Activated CD8-positive, alpha-beta T cell treated with anti-CD3 and anti-CD28 coated beads for 36 hours (primary cell): ENCODE measurements at regions of chr15 and their contacts with region 1.

Region 1: GRCh38 chr15:101167753-101168463 is 83.9 kb downstream of the CHSY1 start:
- DNase-seq: peak; percentile 90
- ATAC-seq: peak; percentile 95
- H3K4me3 Mint-ChIP-seq: peak overlapping the region; percentile 58
- H3K27ac Mint-ChIP-seq: peak overlapping the region; percentile 86
- H3K4me1 Mint-ChIP-seq: peaks cover 26% of the 10 kb centered on the region
- H3K27me3 Mint-ChIP-seq: no peaks in the 10 kb centered on the region
- CTCF ChIP-seq: no peak

Region 2: GRCh38 chr15:101127506-101128076 is 40.3 kb before region 1 on chr15:
- CTCF ChIA-PET with region 1: no interaction called
- POLR2A ChIA-PET with region 1: no interaction called
- intact Hi-C with region 1: loop called (anchors 5 kb)
- DNase-seq: peak; percentile 75
- ATAC-seq: peak; percentile 71
- H3K4me3 Mint-ChIP-seq: peak overlapping the region; percentile 53
- H3K27ac Mint-ChIP-seq: peak overlapping the region; percentile 96
- H3K4me1 Mint-ChIP-seq: peaks cover 57% of the 10 kb centered on the region
- H3K27me3 Mint-ChIP-seq: no peaks in the 10 kb centered on the region
- CTCF ChIP-seq: no peak

Region 3: GRCh38 chr15:101147181-101147580 is 20.7 kb before region 1 on chr15:
- CTCF ChIA-PET with region 1: no interaction called
- POLR2A ChIA-PET with region 1: no interaction called
- intact Hi-C with region 1: no loop called
- DNase-seq: no peak
- ATAC-seq: no peak
- H3K4me3 Mint-ChIP-seq: no peak overlapping the region
- H3K27ac Mint-ChIP-seq: no peak overlapping the region
- H3K4me1 Mint-ChIP-seq: peaks cover 7% of the 10 kb centered on the region
- H3K27me3 Mint-ChIP-seq: no peaks in the 10 kb centered on the region
- CTCF ChIP-seq: no peak

Region 4: GRCh38 chr15:101559952-101560351 is 392.0 kb after region 1 on chr15:
- CTCF ChIA-PET with region 1: no interaction called
- POLR2A ChIA-PET with region 1: no interaction called
- intact Hi-C with region 1: no loop called
- DNase-seq: no peak
- ATAC-seq: no peak
- H3K4me3 Mint-ChIP-seq: no peak overlapping the region
- H3K27ac Mint-ChIP-seq: no peak overlapping the region
- H3K4me1 Mint-ChIP-seq: no peaks in the 10 kb centered on the region
- H3K27me3 Mint-ChIP-seq: peaks cover 2% of the 10 kb centered on the region
- CTCF ChIP-seq: no peak